HepG2 (cell line): ENCODE measurements at regions of chr10 and their contacts with region 1.

Region 1: DNA sequence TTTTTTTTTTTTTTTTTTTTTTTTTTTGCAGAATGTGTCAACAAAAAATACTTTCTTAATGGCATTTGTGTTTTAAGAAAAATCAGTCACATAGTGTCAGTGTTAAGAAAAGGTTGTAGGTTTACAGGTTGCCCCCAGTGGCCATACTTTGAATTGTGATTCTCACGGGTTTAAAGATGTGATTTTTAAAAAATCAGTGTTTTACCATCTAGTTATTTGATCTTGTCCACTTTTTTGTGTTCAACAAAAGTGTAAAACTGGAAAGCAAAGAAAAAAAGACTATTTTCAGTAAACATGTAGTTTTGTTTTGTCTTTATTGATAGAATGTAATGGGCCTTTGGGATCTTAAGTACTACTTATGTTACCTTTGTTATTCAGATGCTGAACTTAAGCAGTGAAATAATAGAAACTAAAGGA is 25.7 kb downstream of the SUV39H2 start:
- DNase-seq: peak; percentile 19
- ATAC-seq: peak; percentile 66
- H3K4me3 ChIP-seq: no peak overlapping the region
- H3K27ac ChIP-seq: no peak overlapping the region
- H3K4me1 ChIP-seq: no peaks in the 10 kb centered on the region
- H3K27me3 ChIP-seq: no peaks in the 10 kb centered on the region
- CTCF ChIP-seq: no peak
- EP300 ChIP-seq: no peak
- POLR2A ChIP-seq: no peak
- RAD21 ChIP-seq: no peak

Region 2: GRCh38 chr10:14878266-14879054 is 25.9 kb before region 1 on chr10 and contains the start of gene SUV39H2:
- CTCF ChIA-PET with region 1: no interaction called
- POLR2A ChIA-PET with region 1: no interaction called
- in situ Hi-C with region 1: no loop called
- intact Hi-C with region 1: loop called (anchors 2 kb)
- DNase-seq: peak; percentile 87
- ATAC-seq: peak; percentile 91
- H3K4me3 ChIP-seq: peak within 1 kb of the TSS; percentile 76 to 98 (median 91)
- H3K27ac ChIP-seq: peak within 1 kb of the TSS; percentile 97
- H3K4me1 ChIP-seq: peaks cover 38% of the 10 kb centered on the region
- H3K27me3 ChIP-seq: no peaks in the 10 kb centered on the region; a peak in 1 of 5 replicates
- CTCF ChIP-seq: peak; percentile 53
- EP300 ChIP-seq: no peak
- POLR2A ChIP-seq: peak; percentile 85 to 94
- RAD21 ChIP-seq: 0 out of 2 replicates have a peak, but pooled peaks have one; percentile 21
- total RNA-seq, gene SUV39H2: 44.3 and 68.8 TPM in 2 replicates

Region 3: DNA sequence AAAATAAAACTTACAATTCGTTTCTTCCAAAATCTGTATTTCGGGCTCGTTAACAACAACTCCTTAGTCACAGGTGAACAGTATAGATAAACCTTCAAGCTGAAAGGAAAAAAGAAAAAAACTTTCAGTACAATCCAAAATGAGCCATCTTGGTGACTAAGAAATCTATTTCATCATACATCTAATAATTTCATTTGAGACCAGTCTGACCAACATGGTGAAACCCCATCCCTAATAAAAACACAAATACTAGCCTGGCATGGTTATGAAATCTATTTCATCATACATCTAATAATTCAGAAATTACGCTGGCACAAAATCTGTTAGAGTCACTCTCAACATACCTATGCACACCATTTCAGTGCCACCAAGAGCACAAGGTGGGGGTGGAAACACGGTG is 40.8 kb after region 1 on chr10:
- CTCF ChIA-PET with region 1: no interaction called
- POLR2A ChIA-PET with region 1: no interaction called
- in situ Hi-C with region 1: no loop called
- intact Hi-C with region 1: no loop called
- DNase-seq: no peak
- ATAC-seq: no peak
- H3K4me3 ChIP-seq: no peak overlapping the region
- H3K27ac ChIP-seq: no peak overlapping the region
- H3K4me1 ChIP-seq: peaks cover 7% of the 10 kb centered on the region
- H3K27me3 ChIP-seq: no peaks in the 10 kb centered on the region
- CTCF ChIP-seq: no peak
- EP300 ChIP-seq: no peak
- POLR2A ChIP-seq: no peak
- RAD21 ChIP-seq: no peak

Region 4: GRCh38 chr10:15293862-15294842 is 389.8 kb after region 1 on chr10:
- CTCF ChIA-PET with region 1: no interaction called
- POLR2A ChIA-PET with region 1: no interaction called
- in situ Hi-C with region 1: no loop called
- intact Hi-C with region 1: no loop called
- DNase-seq: no peak
- ATAC-seq: no peak
- H3K4me3 ChIP-seq: no peak overlapping the region
- H3K27ac ChIP-seq: no peak overlapping the region
- H3K4me1 ChIP-seq: no peaks in the 10 kb centered on the region
- H3K27me3 ChIP-seq: no peaks in the 10 kb centered on the region
- CTCF ChIP-seq: no peak
- EP300 ChIP-seq: no peak
- POLR2A ChIP-seq: no peak
- RAD21 ChIP-seq: no peak